PC-9 (cell line): ENCODE measurements at regions of chr2 and their contacts with region 1.

Region 1: GRCh38 chr2:96195410-96196066 is 13.1 kb downstream of the STARD7 start:
- DNase-seq: no peak
- H3K4me3 ChIP-seq: no peak overlapping the region
- H3K27ac ChIP-seq: no peak overlapping the region
- H3K4me1 ChIP-seq: no peaks in the 10 kb centered on the region
- H3K27me3 ChIP-seq: no peaks in the 10 kb centered on the region
- CTCF ChIP-seq: no peak

Region 2: GRCh38 chr2:95091885-95092555 is 1103.5 kb before region 1 on chr2:
- CTCF ChIA-PET with region 1: no interaction called
- POLR2A ChIA-PET with region 1: no interaction called
- intact Hi-C with region 1: no loop called
- DNase-seq: peak in 1 of 2 experiments; percentile 2
- H3K4me3 ChIP-seq: no peak overlapping the region
- H3K27ac ChIP-seq: no peak overlapping the region
- H3K4me1 ChIP-seq: no peaks in the 10 kb centered on the region
- H3K27me3 ChIP-seq: no peaks in the 10 kb centered on the region
- CTCF ChIP-seq: no peak

Region 3: GRCh38 chr2:96225016-96225533 is 29.5 kb after region 1 on chr2:
- CTCF ChIA-PET with region 1: no interaction called
- POLR2A ChIA-PET with region 1: no interaction called
- intact Hi-C with region 1: no loop called
- DNase-seq: no peak
- H3K4me3 ChIP-seq: no peak overlapping the region
- H3K27ac ChIP-seq: no peak overlapping the region
- H3K4me1 ChIP-seq: no peaks in the 10 kb centered on the region
- H3K27me3 ChIP-seq: no peaks in the 10 kb centered on the region
- CTCF ChIP-seq: no peak

Region 4: GRCh38 chr2:96241900-96242611 is 46.5 kb after region 1 on chr2:
- CTCF ChIA-PET with region 1: no interaction called
- POLR2A ChIA-PET with region 1: no interaction called
- intact Hi-C with region 1: no loop called
- DNase-seq: peak in 1 of 2 experiments; percentile 37
- H3K4me3 ChIP-seq: no peak overlapping the region
- H3K27ac ChIP-seq: no peak overlapping the region
- H3K4me1 ChIP-seq: no peaks in the 10 kb centered on the region
- H3K27me3 ChIP-seq: no peaks in the 10 kb centered on the region
- CTCF ChIP-seq: no peak

Region 5: DNA sequence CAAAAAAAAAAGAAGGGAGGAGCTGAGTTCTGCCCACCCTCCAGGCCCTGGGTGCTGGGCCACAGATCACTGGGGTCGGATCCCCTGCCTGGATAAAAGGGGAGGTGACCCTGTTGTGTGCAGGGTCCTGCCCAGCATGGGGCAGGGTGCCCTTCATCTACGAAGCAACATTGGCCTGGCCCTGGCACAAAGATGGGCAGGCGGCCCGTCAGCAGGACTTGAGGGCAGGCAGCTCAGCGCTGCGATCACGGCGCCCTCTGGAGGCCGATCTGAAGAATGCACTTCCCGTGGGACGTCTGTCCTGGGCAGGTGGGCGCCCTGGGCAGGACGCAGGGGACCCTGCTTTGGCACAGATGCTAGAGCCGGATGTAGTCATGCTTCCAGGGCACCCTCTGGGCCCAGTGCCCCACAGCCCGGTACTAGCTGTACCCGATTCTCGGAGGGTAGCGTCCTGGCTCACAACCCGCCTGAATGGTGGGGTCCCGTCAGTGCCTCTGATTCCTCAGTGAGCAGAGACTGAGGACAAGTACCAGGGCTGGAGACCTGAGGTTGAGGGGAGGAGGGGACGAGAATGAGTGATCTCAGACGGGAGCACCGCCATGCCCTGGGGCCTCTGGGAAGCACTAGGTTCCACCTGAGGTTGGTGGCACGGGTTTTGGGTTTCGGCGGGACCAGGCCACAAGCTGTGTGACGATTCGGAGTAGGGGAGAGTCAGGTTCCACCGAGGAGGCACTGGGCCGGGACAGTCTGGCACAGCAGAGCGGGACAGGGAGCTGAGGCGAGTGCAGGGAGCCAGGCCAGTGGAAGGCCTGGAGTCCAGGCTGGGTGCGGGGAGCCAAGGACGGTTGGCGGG is 359.0 kb after region 1 on chr2:
- CTCF ChIA-PET with region 1: interaction called, 5 read pairs
- POLR2A ChIA-PET with region 1: no interaction called
- intact Hi-C with region 1: loop called (anchors 5 kb)
- DNase-seq: peak; percentile 55 to 67
- H3K4me3 ChIP-seq: no peak overlapping the region
- H3K27ac ChIP-seq: no peak overlapping the region
- H3K4me1 ChIP-seq: peaks cover 30% of the 10 kb centered on the region
- H3K27me3 ChIP-seq: no peaks in the 10 kb centered on the region
- CTCF ChIP-seq: peak; percentile 99